ENCODE measurements at regions of chr12 and their contacts with region 1.

Region 1: GRCh38 chr12:51823875-51824565 is 24.5 kb downstream of the FIGNL2 start:
- DNase-seq: no peak
- ATAC-seq: peak; percentile 31
- H3K4me3 Mint-ChIP-seq: no peak overlapping the region; the same call in 1 of the 2 replicates
- H3K27ac Mint-ChIP-seq: no peak overlapping the region
- H3K4me1 Mint-ChIP-seq: peaks cover 33% of the 10 kb centered on the region
- H3K27me3 Mint-ChIP-seq: peaks cover 23% of the 10 kb centered on the region
- CTCF ChIP-seq: no peak

Region 2: DNA sequence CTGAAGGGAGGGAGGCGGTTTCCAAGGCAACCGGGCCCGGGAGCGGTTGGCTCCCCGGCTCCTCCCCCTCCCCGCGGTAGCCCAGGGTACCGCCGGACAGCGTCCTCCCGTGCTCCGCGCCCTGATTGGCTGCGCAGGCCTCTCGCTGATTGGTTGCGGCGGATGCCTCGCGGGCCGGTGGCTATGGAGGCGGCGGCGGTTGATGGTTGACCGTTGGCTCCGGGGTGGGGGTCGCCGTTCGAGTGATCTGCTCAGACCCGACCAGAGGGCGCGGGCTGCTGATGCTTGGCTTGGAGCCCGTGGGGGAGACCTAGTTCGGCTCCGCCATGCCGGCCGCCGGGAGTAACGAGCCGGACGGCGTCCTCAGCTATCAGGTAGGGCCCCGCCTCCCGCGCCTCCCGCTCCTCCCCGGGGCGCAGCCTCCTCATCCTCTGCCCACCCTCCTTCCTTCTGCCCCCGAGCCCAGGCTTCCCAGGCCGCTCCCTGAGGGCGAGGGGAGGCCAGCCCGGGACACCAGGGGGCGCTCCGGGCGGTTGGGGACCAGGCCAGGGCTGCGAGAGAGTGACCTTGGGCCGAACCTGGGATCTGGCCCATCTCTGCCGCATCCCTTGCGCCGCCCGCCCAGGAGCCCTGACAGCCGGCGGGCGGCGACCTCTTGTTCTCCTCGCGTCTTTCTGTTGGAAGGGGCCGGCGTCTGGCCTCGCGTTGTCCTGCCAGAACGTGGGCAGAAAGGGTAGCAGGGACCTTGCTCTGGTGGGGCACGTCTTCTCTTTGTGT is 399.2 kb before region 1 on chr12 and contains the start of gene SLC4A8:
- CTCF ChIA-PET with region 1: interaction called, 18 read pairs
- POLR2A ChIA-PET with region 1: no interaction called
- DNase-seq: peak; percentile 99
- ATAC-seq: peak; percentile 92
- H3K4me3 Mint-ChIP-seq: peak within 1 kb of the TSS; percentile 77
- H3K27ac Mint-ChIP-seq: no peak within 1 kb of the TSS
- H3K4me1 Mint-ChIP-seq: peaks cover 38% of the 10 kb centered on the region
- H3K27me3 Mint-ChIP-seq: no peaks in the 10 kb centered on the region
- CTCF ChIP-seq: peak; percentile 62
- total RNA-seq, gene SLC4A8: 13.1 to 23.5 TPM (median 16.9 TPM) in 3 replicates

Region 3: DNA sequence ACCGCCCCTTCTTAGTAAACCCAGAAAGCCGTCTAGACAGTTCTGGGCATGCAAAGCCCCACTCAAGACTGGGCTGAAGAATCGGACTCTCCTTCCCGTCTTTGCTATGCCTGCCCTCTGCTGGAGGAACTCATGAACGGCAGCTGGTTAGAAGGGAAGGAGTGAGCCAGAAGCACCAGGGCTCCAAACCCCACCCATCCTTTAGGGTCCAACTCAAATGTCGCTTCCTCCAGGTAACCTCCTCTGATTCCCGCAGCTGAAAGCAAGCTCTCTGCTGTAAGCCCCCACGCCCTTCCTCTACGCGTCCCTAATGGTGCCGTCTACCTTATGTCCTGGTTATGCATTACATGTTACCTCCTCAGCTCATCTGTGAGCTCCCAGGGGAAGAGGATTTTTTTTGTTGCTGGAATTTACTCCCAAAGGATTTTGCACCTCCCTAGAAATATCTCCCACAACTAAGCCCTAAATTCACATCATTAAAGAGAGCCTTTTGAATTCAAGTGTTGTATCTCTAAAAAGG is 292.0 kb before region 1 on chr12:
- CTCF ChIA-PET with region 1: interaction called, 13 read pairs
- POLR2A ChIA-PET with region 1: no interaction called
- DNase-seq: peak; percentile 92
- ATAC-seq: peak; percentile 93
- H3K4me3 Mint-ChIP-seq: peak overlapping the region; percentile 44
- H3K27ac Mint-ChIP-seq: no peak overlapping the region
- H3K4me1 Mint-ChIP-seq: peaks cover 30% of the 10 kb centered on the region
- H3K27me3 Mint-ChIP-seq: no peaks in the 10 kb centered on the region
- CTCF ChIP-seq: peak; percentile 88

Region 4: DNA sequence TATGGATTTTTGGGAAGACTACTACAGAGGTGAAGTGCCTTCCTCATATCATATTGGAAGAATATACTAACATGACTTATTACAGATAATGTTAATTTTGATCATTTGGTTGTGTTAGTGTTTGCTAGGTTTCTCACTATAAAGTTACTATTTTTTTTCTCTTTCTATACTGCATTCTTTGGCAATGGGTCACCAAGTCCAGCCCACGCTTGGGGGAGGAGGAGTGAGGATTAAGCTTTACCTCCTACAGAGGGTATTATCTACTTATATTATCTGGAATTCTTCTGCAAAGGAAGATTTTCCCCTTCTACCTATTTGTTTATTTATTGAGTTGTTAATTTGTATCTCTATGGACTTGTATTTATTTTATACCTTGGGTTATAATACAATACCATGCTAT is 201.5 kb before region 1 on chr12:
- CTCF ChIA-PET with region 1: no interaction called
- POLR2A ChIA-PET with region 1: no interaction called
- DNase-seq: no peak
- ATAC-seq: no peak
- H3K4me3 Mint-ChIP-seq: no peak overlapping the region
- H3K27ac Mint-ChIP-seq: no peak overlapping the region
- H3K4me1 Mint-ChIP-seq: peaks cover 12% of the 10 kb centered on the region
- H3K27me3 Mint-ChIP-seq: no peaks in the 10 kb centered on the region
- CTCF ChIP-seq: no peak

Region 5: DNA sequence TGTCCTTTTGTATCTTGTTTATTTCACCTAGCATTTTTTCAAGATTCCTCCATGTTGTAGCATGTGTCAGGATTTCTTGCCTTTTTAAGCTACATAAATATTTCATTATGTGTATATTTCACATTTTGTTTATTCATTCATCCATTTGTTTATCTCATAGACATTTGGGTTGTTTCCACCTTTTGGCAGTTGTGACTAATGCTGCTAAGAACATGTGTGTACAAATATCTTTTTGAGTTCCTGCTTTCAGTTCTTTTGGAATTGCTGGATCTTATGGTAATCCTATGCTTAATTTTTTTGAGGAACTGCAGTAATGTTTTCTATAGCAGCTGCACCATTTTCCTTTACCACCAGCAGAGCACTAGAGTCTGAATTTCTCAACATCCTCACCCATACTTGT is 170.6 kb before region 1 on chr12:
- CTCF ChIA-PET with region 1: no interaction called
- POLR2A ChIA-PET with region 1: no interaction called
- DNase-seq: no peak
- ATAC-seq: no peak
- H3K4me3 Mint-ChIP-seq: no peak overlapping the region
- H3K27ac Mint-ChIP-seq: no peak overlapping the region
- H3K4me1 Mint-ChIP-seq: peaks cover 4% of the 10 kb centered on the region; the same call in 1 of the 2 replicates
- H3K27me3 Mint-ChIP-seq: peaks cover 2% of the 10 kb centered on the region; the same call in 1 of the 2 replicates
- CTCF ChIP-seq: no peak

Region 6: GRCh38 chr12:51749206-51749985 is 74.6 kb before region 1 on chr12:
- CTCF ChIA-PET with region 1: no interaction called
- POLR2A ChIA-PET with region 1: no interaction called
- DNase-seq: no peak
- ATAC-seq: no peak
- H3K4me3 Mint-ChIP-seq: no peak overlapping the region
- H3K27ac Mint-ChIP-seq: no peak overlapping the region; the same call in 1 of the 2 replicates
- H3K4me1 Mint-ChIP-seq: no peaks in the 10 kb centered on the region
- H3K27me3 Mint-ChIP-seq: no peaks in the 10 kb centered on the region
- CTCF ChIP-seq: no peak

Region 7: DNA sequence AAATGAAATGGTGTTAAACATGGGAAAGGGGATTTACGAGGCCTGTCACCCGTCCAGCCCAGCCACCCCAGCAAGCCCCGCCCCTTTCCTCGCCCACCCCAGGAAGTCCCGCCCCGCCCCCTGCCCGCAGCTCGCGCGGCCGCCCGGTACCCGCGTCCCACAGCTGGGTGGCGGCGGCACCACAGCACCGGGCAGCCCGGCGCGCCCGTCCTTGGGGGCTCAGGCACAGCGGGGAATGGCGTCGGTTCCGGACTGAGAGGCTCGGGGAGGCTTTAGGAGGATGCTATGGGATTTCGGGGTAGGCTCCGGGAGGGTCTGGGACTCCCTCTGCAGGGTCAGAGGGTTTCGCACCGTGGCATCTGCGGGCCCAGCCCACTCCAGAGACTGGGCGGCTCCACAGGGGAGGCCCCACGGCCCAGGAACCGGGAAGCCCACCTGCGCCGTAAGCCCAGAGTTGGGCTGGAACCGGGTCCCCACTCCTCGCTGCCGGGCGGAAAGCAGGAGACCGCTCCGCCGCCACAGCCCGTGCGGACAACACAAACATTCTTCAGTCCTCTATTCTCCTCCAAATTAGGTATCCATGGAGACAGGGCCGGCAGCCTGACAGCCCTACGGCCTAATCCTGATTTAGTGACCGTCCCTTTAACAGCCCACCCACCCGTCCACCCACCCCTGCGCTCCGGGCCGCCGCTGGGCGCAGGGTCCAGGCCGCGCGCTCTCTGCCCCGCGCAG is 23.1 kb after region 1 on chr12:
- CTCF ChIA-PET with region 1: interaction called, 11 read pairs
- POLR2A ChIA-PET with region 1: no interaction called
- DNase-seq: peak; percentile 64
- ATAC-seq: peak; percentile 41
- H3K4me3 Mint-ChIP-seq: peak overlapping the region; percentile 75
- H3K27ac Mint-ChIP-seq: no peak overlapping the region
- H3K4me1 Mint-ChIP-seq: peaks cover 39% of the 10 kb centered on the region
- H3K27me3 Mint-ChIP-seq: peaks cover 52% of the 10 kb centered on the region
- CTCF ChIP-seq: no peak

Region 8: GRCh38 chr12:51855596-51856428 is 31.8 kb after region 1 on chr12:
- CTCF ChIA-PET with region 1: interaction called, 11 read pairs
- POLR2A ChIA-PET with region 1: interaction called, 5 read pairs
- DNase-seq: peak; percentile 88
- ATAC-seq: peak; percentile 97
- H3K4me3 Mint-ChIP-seq: peak overlapping the region; percentile 79
- H3K27ac Mint-ChIP-seq: peak overlapping the region; percentile 93
- H3K4me1 Mint-ChIP-seq: peaks cover 38% of the 10 kb centered on the region
- H3K27me3 Mint-ChIP-seq: peaks cover 48% of the 10 kb centered on the region
- CTCF ChIP-seq: no peak

Region 9: DNA sequence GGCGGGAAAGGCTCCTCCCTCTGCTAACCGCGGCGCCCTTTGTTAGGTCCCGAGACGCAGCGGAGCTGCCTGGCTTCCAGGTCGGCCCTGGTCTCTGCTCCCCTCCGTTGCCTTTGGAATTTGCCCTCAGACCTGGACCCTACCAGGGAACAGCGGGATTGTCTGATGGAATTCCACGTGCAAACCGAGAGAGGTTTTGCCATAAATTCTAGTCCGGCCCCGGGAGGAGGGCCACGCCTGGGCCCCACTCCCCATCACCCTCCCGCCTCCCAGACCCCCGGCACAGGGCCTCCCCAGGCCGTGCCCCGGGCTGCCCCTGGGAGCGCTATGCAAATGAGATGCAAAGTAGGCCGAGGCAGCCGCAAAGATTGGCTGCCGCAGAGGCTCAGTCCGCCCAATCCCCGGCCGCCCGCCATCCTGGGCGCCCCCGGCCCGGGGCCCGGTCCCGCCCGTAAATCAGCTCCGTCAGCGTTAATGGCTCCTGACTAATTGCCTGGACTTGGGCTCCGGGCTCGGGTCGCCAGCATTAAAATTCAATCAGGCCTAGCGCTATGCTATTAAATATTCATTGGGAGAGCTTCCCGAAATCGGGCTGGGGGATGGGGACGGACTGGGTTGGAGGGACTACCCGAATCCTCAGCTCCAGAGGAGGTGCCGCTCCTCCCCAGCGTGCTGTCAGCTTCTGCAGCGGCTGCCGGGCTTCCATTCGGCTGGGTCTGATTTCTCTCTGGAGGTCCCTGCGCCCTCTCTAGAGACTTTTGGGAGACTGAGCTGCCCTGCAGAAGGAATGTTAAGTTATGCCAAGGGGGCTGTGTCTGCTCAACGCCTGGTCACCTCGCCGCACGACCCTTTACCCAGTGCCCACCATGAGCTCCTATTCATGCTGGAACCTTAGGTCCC is 40.2 kb after region 1 on chr12:
- CTCF ChIA-PET with region 1: interaction called, 164 read pairs
- POLR2A ChIA-PET with region 1: interaction called, 4 read pairs
- DNase-seq: peak; percentile 88
- ATAC-seq: peak; percentile 86
- H3K4me3 Mint-ChIP-seq: peak overlapping the region; percentile 80
- H3K27ac Mint-ChIP-seq: no peak overlapping the region
- H3K4me1 Mint-ChIP-seq: peaks cover 52% of the 10 kb centered on the region
- H3K27me3 Mint-ChIP-seq: peaks cover 65% of the 10 kb centered on the region
- CTCF ChIP-seq: no peak

Region 10: GRCh38 chr12:51898937-51899336 is 74.9 kb after region 1 on chr12:
- CTCF ChIA-PET with region 1: interaction called, 10 read pairs
- POLR2A ChIA-PET with region 1: no interaction called
- DNase-seq: no peak
- ATAC-seq: no peak
- H3K4me3 Mint-ChIP-seq: no peak overlapping the region
- H3K27ac Mint-ChIP-seq: no peak overlapping the region
- H3K4me1 Mint-ChIP-seq: peaks cover 2% of the 10 kb centered on the region; the same call in 1 of the 2 replicates
- H3K27me3 Mint-ChIP-seq: 0 out of 2 replicates have a peak, but pooled peaks cover 2% of the 10 kb centered on the region
- CTCF ChIP-seq: no peak

Measured in WTC11 (cell line).